ENCODE measurements at regions of chr2 and their contacts with region 1.

Region 1: GRCh38 chr2:166695154-166695553 is 193.1 kb upstream of the XIRP2 start:
- DNase-seq: no peak
- H3K4me3 Mint-ChIP-seq: no peak overlapping the region
- H3K27ac Mint-ChIP-seq: no peak overlapping the region
- H3K4me1 Mint-ChIP-seq: no peaks in the 10 kb centered on the region
- H3K27me3 Mint-ChIP-seq: no peaks in the 10 kb centered on the region

Region 2: DNA sequence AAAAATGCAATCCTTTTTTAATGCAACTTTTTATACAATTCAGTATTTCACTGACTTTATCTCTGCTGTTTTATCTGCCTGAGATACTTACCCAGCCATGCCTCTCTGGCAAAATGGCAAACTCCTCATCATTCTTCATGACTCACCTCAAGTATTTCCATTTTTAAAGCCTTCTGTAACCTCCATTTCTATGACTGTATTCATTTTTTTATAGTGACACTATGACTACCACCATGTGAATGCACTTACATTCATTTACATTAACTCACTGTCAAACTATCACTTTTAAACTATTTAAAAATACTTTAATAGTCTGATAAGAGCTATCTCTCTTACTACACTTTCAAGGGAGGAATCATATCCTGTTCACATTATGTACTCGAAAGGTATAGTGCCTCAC is 101.8 kb before region 1 on chr2:
- intact Hi-C with region 1: no loop called
- DNase-seq: no peak
- H3K4me3 Mint-ChIP-seq: no peak overlapping the region
- H3K27ac Mint-ChIP-seq: no peak overlapping the region
- H3K4me1 Mint-ChIP-seq: no peaks in the 10 kb centered on the region
- H3K27me3 Mint-ChIP-seq: no peaks in the 10 kb centered on the region

Region 3: DNA sequence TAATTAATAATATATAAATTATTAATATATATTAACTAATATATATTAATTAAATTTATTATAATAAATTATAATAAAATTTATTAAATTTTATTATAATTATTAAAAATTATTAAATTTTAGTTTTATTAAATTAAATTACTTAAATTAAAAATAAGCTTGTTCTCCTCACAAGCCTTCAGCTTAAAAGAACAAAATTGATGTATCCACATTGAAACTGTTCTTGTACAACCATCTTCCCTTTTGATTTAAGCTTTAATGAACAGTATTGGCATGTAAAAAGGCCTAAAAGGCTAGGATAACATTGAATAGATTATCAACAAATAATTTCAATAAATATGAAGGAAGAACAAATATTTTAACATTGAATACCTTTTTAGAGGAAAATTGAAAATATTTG is 130.8 kb after region 1 on chr2:
- intact Hi-C with region 1: loop called (anchors 5 kb)
- DNase-seq: no peak
- H3K4me3 Mint-ChIP-seq: no peak overlapping the region
- H3K27ac Mint-ChIP-seq: no peak overlapping the region
- H3K4me1 Mint-ChIP-seq: no peaks in the 10 kb centered on the region
- H3K27me3 Mint-ChIP-seq: no peaks in the 10 kb centered on the region

Measured in activated CD4-positive, alpha-beta T cell treated with anti-CD3 and anti-CD28 coated beads, Interleukin-2, amount 10 ng/mL, durations not matched to agents 24 days and 14 days (primary cell).